PC-9 (cell line): ENCODE measurements at regions of chr5 and their contacts with region 1.

Region 1: DNA sequence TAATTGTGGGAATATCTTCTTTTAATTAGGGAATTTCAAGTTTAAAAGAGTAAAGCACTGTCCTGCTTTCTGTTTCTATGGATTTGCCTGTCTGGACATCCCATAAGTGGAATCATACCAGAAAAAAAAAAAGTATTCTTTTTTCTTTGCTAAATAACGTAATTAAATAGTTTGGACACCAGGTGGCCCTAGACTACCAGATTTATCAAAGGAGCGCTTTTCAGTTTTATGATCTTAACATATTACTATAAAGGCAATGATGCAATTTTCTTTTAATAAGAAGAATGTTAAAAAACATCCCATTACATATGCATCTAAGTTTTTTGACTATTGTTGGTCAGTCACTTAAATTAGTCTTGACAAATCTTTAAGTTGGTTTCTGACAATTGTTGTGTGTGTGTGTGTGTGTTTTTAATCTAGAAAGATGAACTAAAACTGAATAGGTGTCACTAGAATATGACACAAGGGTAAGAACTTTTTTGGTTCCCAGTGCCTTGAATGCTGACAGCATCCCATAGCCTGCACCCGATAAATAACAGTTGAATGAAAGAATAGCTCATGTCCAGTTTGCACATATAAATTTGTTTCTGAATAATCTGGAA is 49.5 kb downstream of the C5orf22 start:
- DNase-seq: no peak
- H3K4me3 ChIP-seq: no peak overlapping the region
- H3K27ac ChIP-seq: no peak overlapping the region
- H3K4me1 ChIP-seq: no peaks in the 10 kb centered on the region
- H3K27me3 ChIP-seq: peaks cover 73% of the 10 kb centered on the region
- CTCF ChIP-seq: peak; percentile 88

Region 2: GRCh38 chr5:31825518-31826068 is 244.0 kb after region 1 on chr5:
- CTCF ChIA-PET with region 1: no interaction called
- POLR2A ChIA-PET with region 1: no interaction called
- intact Hi-C with region 1: loop called (anchors 1 kb)
- DNase-seq: peak in 1 of 2 experiments; percentile 53
- H3K4me3 ChIP-seq: no peak overlapping the region
- H3K27ac ChIP-seq: no peak overlapping the region
- H3K4me1 ChIP-seq: no peaks in the 10 kb centered on the region
- H3K27me3 ChIP-seq: peaks cover 57% of the 10 kb centered on the region
- CTCF ChIP-seq: peak; percentile 82

Region 3: GRCh38 chr5:32092938-32093812 is 511.6 kb after region 1 on chr5:
- CTCF ChIA-PET with region 1: interaction called, 5 read pairs
- POLR2A ChIA-PET with region 1: no interaction called
- intact Hi-C with region 1: loop called (anchors 1 kb)
- DNase-seq: peak; percentile 63 to 75
- H3K4me3 ChIP-seq: no peak overlapping the region
- H3K27ac ChIP-seq: no peak overlapping the region
- H3K4me1 ChIP-seq: no peaks in the 10 kb centered on the region
- H3K27me3 ChIP-seq: no peaks in the 10 kb centered on the region
- CTCF ChIP-seq: peak; percentile 93

Region 4: DNA sequence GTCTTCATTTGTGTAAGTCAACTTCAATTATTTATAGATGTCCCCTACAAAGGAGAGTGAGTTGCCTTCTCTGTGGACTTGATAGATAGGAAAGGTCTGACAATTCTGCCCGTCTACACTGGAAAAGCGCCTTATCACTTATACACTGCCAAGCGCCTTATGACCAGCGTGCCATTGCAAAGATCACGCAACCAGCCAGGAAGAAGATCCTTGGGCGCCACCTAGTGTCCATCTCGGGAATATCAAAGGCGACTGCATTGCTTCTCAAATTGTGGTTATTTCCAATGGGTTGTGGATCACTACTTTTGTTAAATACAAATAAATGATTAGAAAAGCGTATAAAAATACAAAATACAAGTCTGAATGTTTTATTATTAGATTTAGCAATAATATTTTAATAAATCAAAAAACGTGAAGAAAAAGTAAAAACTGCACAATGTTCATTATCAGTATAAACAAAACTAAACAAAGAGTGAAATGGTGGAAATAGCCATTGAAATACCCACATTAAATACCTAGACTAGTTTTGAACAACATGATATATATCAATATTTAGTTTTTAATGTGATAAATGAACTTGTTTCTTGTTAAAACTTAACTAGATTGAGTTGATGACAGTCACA is 1031.6 kb after region 1 on chr5:
- CTCF ChIA-PET with region 1: no interaction called
- POLR2A ChIA-PET with region 1: no interaction called
- intact Hi-C with region 1: loop called (anchors 1 kb)
- DNase-seq: peak; percentile 62 to 86
- H3K4me3 ChIP-seq: no peak overlapping the region
- H3K27ac ChIP-seq: no peak overlapping the region
- H3K4me1 ChIP-seq: no peaks in the 10 kb centered on the region
- H3K27me3 ChIP-seq: no peaks in the 10 kb centered on the region
- CTCF ChIP-seq: peak; percentile 100

Region 5: GRCh38 chr5:33205727-33206410 is 1624.3 kb after region 1 on chr5:
- CTCF ChIA-PET with region 1: no interaction called
- POLR2A ChIA-PET with region 1: no interaction called
- intact Hi-C with region 1: no loop called
- DNase-seq: no peak
- H3K4me3 ChIP-seq: no peak overlapping the region
- H3K27ac ChIP-seq: no peak overlapping the region
- H3K4me1 ChIP-seq: no peaks in the 10 kb centered on the region
- H3K27me3 ChIP-seq: no peaks in the 10 kb centered on the region
- CTCF ChIP-seq: no peak